Body of pancreas (tissue), 4 donors: ENCODE measurements at regions of chr19 and their contacts with region 1.

Region 1: DNA sequence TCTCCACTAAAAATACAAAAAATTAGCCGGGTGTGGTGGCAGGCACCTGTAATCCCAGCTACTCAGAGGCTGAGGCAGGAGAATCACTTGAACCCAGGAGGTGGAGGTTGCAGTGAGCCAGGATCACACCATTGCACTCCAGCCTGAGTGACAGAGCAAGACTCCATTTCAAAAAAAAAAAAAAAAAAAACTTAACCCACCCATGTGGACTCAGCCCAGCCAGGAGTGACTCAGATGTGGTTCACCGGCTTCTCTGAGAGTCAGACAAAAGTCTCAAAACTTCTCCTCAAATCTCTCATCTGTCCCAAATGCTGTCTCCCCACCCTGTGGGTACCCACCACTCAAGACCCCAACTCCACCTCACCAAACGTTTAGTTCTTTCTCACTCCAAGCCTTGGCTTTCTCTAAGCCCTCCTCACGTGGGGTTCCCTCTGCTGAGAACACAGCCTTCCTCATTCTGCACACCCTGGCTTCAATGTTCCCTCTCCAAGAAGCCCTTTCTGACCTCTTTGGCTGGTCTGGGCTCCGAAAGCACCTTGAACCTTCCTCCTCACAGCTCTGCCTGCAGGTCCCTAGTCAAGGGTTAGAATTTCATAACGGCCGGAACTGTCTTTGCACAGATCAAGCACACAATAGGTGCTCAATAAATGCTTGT is 11.1 kb upstream of the RAB3A start:
- DNase-seq: no peak
- ATAC-seq: no peak
- H3K4me3 ChIP-seq: no peak overlapping the region
- H3K27ac ChIP-seq: no peak overlapping the region
- H3K4me1 ChIP-seq: no peaks in the 10 kb centered on the region
- H3K27me3 ChIP-seq: no peaks in the 10 kb centered on the region
- CTCF ChIP-seq: no peak
- POLR2A ChIP-seq: no peak

Region 2: DNA sequence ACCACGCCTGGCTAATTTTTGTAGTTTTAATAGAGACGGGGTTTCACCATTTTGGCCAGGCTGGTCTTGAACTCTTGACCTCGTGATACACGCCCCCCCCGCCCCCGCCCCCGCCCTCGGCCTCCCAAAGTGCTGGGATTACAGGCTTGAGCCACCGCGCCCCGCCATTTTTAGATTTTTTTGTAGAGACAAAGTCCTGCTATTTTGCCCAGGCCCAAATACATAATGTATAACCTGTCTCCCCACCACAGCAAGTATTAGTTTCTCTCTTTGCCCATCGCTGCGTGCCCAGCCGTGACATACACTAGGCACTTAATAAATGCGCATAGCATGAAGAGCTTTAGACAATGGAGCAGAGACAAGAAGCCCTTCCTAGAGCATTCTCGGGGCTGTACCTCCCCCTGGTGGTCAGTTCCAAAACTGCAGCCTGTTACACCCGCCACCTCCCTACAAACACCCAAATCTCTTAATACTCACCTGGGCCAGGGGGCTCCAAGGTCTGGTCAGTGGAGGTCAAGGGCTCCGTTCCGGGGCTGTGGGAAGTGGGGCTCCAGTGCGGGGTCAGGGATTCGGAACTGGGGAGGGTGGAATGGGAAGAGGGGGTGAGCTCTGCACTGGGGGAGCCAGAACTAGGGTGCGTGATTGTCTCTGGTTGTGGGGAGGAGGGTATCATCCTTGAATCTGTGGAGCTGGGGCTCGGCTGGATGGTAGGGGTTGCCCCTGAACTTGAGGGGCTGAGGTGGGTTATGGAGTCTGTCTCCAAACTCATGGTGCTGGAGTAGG is 36.9 kb after region 1 on chr19:
- intact Hi-C with region 1: loop called (anchors 5 kb)
- DNase-seq: peak; percentile 73 to 83 (median 78)
- ATAC-seq: peak; percentile 78
- H3K4me3 ChIP-seq: no peak overlapping the region
- H3K27ac ChIP-seq: no peak overlapping the region
- H3K4me1 ChIP-seq: peaks cover 10% of the 10 kb centered on the region
- H3K27me3 ChIP-seq: no peaks in the 10 kb centered on the region
- CTCF ChIP-seq: peak; percentile 87 to 96 (median 90)
- POLR2A ChIP-seq: no peak

Region 3: DNA sequence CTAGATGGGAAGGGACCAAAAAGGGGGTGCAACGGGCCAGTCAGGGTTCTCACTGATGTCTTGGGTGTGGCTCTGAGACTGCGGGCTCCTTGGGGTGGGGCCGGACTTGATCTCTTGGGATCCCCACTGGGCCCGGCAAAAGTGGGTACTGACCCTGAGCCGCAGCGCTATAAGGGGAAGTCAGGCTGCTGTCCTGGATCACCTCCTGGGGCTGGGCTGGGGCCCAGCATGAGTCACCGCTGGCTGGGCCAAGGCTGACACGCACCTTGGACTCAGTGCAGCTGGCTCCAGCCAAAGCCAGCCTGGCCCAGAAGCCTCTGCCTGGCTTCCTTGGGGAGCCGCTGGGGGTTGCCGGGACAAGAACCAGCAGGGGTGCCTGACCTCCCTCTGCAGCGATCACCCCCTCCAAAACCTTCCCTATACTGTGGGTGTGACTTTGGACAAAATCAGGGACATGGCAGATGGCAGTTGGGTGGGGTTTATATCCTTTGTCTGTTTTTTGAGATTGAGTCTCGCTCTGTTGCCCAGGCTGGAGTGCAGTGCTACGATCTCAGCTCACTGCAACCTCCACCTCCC is 60.0 kb after region 1 on chr19:
- intact Hi-C with region 1: no loop called
- DNase-seq: peak; percentile 91 to 95 (median 94)
- ATAC-seq: peak; percentile 82
- H3K4me3 ChIP-seq: no peak overlapping the region
- H3K27ac ChIP-seq: peak overlapping the region; percentile 55 to 85 (median 79)
- H3K4me1 ChIP-seq: peaks cover 58% of the 10 kb centered on the region
- H3K27me3 ChIP-seq: no peaks in the 10 kb centered on the region
- CTCF ChIP-seq: peak in 2 of 7 experiments; percentile 25 to 34
- POLR2A ChIP-seq: peak; percentile 32 to 57 (median 42)